IMR-90 (cell line): ENCODE measurements at regions of chr7 and their contacts with region 1.

Region 1: GRCh38 chr7:141575164-141575563 is 24.0 kb downstream of the AGK start:
- DNase-seq: peak; percentile 18
- ATAC-seq: peak; percentile 35
- H3K4me3 ChIP-seq: no peak overlapping the region
- H3K27ac ChIP-seq: no peak overlapping the region
- H3K4me1 ChIP-seq: no peaks in the 10 kb centered on the region
- H3K27me3 ChIP-seq: no peaks in the 10 kb centered on the region
- CTCF ChIP-seq: no peak
- POLR2A ChIP-seq: no peak
- RAD21 ChIP-seq: no peak

Region 2: DNA sequence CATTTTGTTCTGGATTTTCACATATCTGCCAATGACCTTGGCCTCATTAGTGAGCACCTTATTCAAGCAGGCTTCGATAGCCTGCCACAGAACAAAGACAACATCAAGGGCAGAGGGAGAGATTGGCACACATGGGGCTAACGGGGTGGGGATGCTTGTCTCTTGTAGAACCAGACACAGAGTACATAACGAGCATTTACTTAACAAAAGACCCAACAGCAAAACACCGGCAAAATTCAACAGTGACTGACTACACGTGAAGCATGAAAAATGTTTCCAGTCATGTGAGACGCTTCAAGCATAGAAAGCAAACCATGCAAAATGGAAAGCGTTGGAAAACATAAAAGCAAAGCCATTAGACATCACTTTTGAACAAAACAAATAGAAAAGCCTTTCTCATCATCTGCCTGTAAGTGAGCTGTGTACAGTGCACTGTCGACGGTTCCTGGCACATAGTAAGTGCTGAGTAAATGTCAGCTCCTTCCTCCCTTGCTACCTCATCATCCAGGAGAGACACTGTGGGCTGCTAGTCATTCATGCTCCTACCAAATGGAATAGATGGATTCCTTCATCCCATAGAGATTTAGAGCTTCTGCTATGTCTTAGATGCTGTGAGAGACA is 158.4 kb before region 1 on chr7:
- CTCF ChIA-PET with region 1: no interaction called
- POLR2A ChIA-PET with region 1: no interaction called
- dilution Hi-C with region 1: no loop called
- in situ Hi-C with region 1: no loop called
- intact Hi-C with region 1: no loop called
- DNase-seq: no peak
- ATAC-seq: no peak
- H3K4me3 ChIP-seq: no peak overlapping the region
- H3K27ac ChIP-seq: no peak overlapping the region
- H3K4me1 ChIP-seq: no peaks in the 10 kb centered on the region
- H3K27me3 ChIP-seq: no peaks in the 10 kb centered on the region
- CTCF ChIP-seq: no peak
- POLR2A ChIP-seq: no peak
- RAD21 ChIP-seq: no peak

Region 3: GRCh38 chr7:141558544-141559183 is 16.5 kb before region 1 on chr7:
- CTCF ChIA-PET with region 1: no interaction called
- POLR2A ChIA-PET with region 1: no interaction called
- dilution Hi-C with region 1: no loop called
- in situ Hi-C with region 1: no loop called
- intact Hi-C with region 1: loop called (anchors 2 kb)
- DNase-seq: peak; percentile 55
- ATAC-seq: peak; percentile 46
- H3K4me3 ChIP-seq: no peak overlapping the region
- H3K27ac ChIP-seq: no peak overlapping the region
- H3K4me1 ChIP-seq: peaks cover 3% of the 10 kb centered on the region
- H3K27me3 ChIP-seq: no peaks in the 10 kb centered on the region
- CTCF ChIP-seq: no peak
- POLR2A ChIP-seq: no peak
- RAD21 ChIP-seq: no peak